Left lung (tissue), 14 donors: ENCODE measurements at regions of chr5 and their contacts with region 1.

Region 1: GRCh38 chr5:142922223-142922952 is 152.2 kb downstream of the ARHGAP26 start:
- DNase-seq: peak in 1 of 4 donors; percentile 54
- ATAC-seq: peak; percentile 76
- H3K4me3 ChIP-seq: no peak overlapping the region
- H3K27ac ChIP-seq: peak overlapping the region in 1 of 2 donors; percentile 53
- H3K4me1 ChIP-seq: peaks cover 10 to 59% of the 10 kb centered on the region in 2 donors
- H3K27me3 ChIP-seq: no peaks in the 10 kb centered on the region
- CTCF ChIP-seq: peak; percentile 29 to 35

Region 2: GRCh38 chr5:143824851-143825720 is 902.7 kb after region 1 on chr5:
- intact Hi-C with region 1: loop called in 1 of 2 experiments (anchors 10 kb)
- DNase-seq: peak; percentile 65 to 84 (median 80)
- ATAC-seq: peak; percentile 97
- H3K4me3 ChIP-seq: no peak overlapping the region
- H3K27ac ChIP-seq: no peak overlapping the region
- H3K4me1 ChIP-seq: peaks cover 0 to 19% of the 10 kb centered on the region in 2 donors
- H3K27me3 ChIP-seq: no peaks in the 10 kb centered on the region
- CTCF ChIP-seq: peak; percentile 93 to 96